Naive thymus-derived CD4-positive, alpha-beta T cell (primary cell): ENCODE measurements at regions of chr7 and their contacts with region 1.

Region 1: DNA sequence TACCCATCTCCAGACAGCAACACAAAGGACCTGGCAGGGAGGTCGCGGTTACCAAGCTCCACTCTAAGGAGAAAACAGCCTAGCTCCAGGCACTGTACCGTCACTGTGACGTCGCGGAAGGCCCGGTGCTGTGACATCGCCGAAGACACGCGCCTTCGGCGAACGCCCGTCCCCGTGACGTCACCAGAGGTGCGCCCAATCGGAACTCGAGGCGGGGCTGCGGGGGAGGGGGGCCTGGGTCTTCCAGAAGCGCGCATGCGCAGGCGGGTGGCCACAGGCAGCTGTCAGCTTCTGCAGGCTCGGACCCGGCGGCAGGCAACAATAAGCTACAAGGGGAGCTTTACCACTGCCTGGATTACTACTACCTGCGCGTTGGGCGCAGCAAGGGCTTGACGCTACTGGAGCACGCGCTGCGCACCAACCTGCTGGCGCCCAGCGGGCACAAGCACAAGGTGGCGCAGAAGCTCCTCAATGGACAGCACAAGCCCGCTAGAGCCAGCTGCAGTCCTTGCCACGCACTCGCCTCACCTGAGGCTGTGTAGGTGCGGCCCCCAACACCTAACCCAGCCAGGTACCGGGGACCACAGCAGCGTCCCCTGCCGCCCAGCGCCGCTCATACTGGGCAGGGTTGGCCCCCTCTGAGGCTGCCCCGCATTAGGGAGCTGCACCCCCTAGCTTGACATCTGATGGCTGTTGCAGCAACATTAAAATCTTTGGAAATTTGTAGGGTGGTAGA is 208.4 kb downstream of the TPST1 start:
- DNase-seq: peak; percentile 78 to 92 (median 82)
- ATAC-seq: peak; percentile 94
- H3K4me3 ChIP-seq: peak overlapping the region; percentile 74
- H3K4me3 Mint-ChIP-seq: peak overlapping the region; percentile 63 to 82 (median 80)
- H3K27ac ChIP-seq: peak overlapping the region; percentile 37
- H3K27ac Mint-ChIP-seq: peak overlapping the region; percentile 38 to 95 (median 90)
- H3K4me1 ChIP-seq: peaks cover 0 to 6% of the 10 kb centered on the region in 2 donors
- H3K4me1 Mint-ChIP-seq: peaks cover 0 to 22% (median 10%) of the 10 kb centered on the region in 7 donors
- H3K27me3 ChIP-seq: no peaks in the 10 kb centered on the region
- H3K27me3 Mint-ChIP-seq: no peaks in the 10 kb centered on the region

Region 2: GRCh38 chr7:66033471-66034385 is 379.8 kb before region 1 on chr7:
- CTCF ChIA-PET with region 1: no interaction called
- POLR2A ChIA-PET with region 1: interaction called, 3 read pairs
- intact Hi-C with region 1: loop called in 1 of 2 experiments (anchors 5 kb)
- DNase-seq: no peak
- ATAC-seq: peak; percentile 87
- H3K4me3 ChIP-seq: no peak overlapping the region
- H3K4me3 Mint-ChIP-seq: no peak overlapping the region
- H3K27ac ChIP-seq: no peak overlapping the region
- H3K27ac Mint-ChIP-seq: no peak overlapping the region
- H3K4me1 ChIP-seq: no peaks in the 10 kb centered on the region
- H3K4me1 Mint-ChIP-seq: peaks cover 0 to 10% (median 0%) of the 10 kb centered on the region in 7 donors
- H3K27me3 ChIP-seq: no peaks in the 10 kb centered on the region
- H3K27me3 Mint-ChIP-seq: no peaks in the 10 kb centered on the region

Region 3: GRCh38 chr7:66075590-66076461 is 337.7 kb before region 1 on chr7 and contains the start of gene ASL:
- CTCF ChIA-PET with region 1: no interaction called
- POLR2A ChIA-PET with region 1: no interaction called
- intact Hi-C with region 1: loop called in 1 of 2 experiments (anchors 2 kb)
- DNase-seq: peak; percentile 71 to 96 (median 78)
- ATAC-seq: peak; percentile 99
- H3K4me3 ChIP-seq: peak within 1 kb of the TSS; percentile 83
- H3K4me3 Mint-ChIP-seq: peak within 1 kb of the TSS; percentile 80 to 96 (median 87)
- H3K27ac ChIP-seq: peak within 1 kb of the TSS; percentile 69
- H3K27ac Mint-ChIP-seq: peak within 1 kb of the TSS in 8 of 9 donors; percentile 42 to 89 (median 77)
- H3K4me1 ChIP-seq: peaks cover 6 to 7% of the 10 kb centered on the region in 2 donors
- H3K4me1 Mint-ChIP-seq: peaks cover 5 to 20% (median 19%) of the 10 kb centered on the region in 7 donors
- H3K27me3 ChIP-seq: no peaks in the 10 kb centered on the region
- H3K27me3 Mint-ChIP-seq: peaks cover 0 to 2% (median 0%) of the 10 kb centered on the region in 5 donors
- total RNA-seq, gene ASL: 11.3 to 29.7 (median 12.8) TPM

Region 4: DNA sequence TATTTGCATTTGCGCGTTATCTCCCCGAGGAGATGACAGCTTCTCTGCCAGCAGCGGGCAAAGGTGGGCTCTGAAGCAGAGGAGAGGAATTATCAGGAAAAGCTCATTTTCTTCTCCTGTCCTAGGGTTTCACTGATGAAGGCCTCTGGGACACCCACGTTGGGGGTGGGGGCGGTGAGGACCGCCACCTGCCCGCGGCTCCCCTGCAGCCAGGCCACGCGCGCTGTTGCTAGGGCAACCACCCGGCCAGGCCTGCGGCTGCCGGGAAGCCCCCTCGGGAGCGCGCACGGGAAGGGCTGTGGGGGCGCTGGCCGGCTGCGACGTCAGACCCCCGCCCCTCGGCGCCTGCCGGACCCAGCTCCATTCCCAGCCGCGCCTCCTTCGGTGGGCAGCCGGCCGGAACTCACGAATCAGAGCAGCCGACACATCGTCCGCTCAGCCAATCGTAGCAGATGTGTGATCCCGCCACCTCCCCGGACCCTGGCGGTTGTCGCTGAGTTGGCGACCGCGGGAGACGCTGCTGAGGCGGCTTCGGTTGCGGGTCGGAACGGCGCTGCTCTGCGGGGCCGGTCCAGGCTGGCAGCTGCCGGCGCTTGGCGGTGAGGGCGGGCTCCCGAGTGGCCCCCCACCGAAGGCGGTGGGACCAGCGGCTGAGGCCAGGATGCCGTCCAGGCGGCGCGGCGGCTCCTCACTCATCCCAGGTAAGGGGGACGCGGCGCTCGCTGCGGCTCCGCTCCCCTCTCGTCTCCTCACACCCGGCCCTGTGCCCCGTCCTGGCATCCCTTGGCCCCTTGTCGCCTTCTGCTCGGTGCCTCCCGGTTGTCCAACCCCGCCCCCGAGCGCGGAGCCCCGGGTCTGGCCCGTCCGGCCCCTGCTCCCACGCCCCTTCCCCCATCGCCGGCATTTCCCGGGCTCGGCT is 208.5 kb before region 1 on chr7 and contains the start of gene TPST1:
- CTCF ChIA-PET with region 1: no interaction called
- POLR2A ChIA-PET with region 1: no interaction called
- intact Hi-C with region 1: loop called in 1 of 2 experiments (anchors 1 kb)
- DNase-seq: peak; percentile 69 to 83 (median 78)
- ATAC-seq: peak; percentile 94
- H3K4me3 ChIP-seq: peak within 1 kb of the TSS; percentile 49
- H3K4me3 Mint-ChIP-seq: peak within 1 kb of the TSS; percentile 90 to 98 (median 92)
- H3K27ac ChIP-seq: peak within 1 kb of the TSS; percentile 60
- H3K27ac Mint-ChIP-seq: peak within 1 kb of the TSS in 8 of 9 donors; percentile 75 to 91 (median 83)
- H3K4me1 ChIP-seq: peaks cover 0 to 30% of the 10 kb centered on the region in 2 donors
- H3K4me1 Mint-ChIP-seq: peaks cover 26 to 57% (median 46%) of the 10 kb centered on the region in 7 donors
- H3K27me3 ChIP-seq: no peaks in the 10 kb centered on the region
- H3K27me3 Mint-ChIP-seq: peaks cover 0 to 48% (median 6%) of the 10 kb centered on the region in 5 donors
- total RNA-seq, gene TPST1: 0.70 to 5.0 (median 2.7) TPM